Activated CD8-positive, alpha-beta T cell treated with anti-CD3 and anti-CD28 coated beads, Interleukin-2, amount 10 ng/mL, durations not matched to agents 7 days and 5 days (primary cell): ENCODE measurements at regions of chrX and their contacts with region 1.

Region 1: DNA sequence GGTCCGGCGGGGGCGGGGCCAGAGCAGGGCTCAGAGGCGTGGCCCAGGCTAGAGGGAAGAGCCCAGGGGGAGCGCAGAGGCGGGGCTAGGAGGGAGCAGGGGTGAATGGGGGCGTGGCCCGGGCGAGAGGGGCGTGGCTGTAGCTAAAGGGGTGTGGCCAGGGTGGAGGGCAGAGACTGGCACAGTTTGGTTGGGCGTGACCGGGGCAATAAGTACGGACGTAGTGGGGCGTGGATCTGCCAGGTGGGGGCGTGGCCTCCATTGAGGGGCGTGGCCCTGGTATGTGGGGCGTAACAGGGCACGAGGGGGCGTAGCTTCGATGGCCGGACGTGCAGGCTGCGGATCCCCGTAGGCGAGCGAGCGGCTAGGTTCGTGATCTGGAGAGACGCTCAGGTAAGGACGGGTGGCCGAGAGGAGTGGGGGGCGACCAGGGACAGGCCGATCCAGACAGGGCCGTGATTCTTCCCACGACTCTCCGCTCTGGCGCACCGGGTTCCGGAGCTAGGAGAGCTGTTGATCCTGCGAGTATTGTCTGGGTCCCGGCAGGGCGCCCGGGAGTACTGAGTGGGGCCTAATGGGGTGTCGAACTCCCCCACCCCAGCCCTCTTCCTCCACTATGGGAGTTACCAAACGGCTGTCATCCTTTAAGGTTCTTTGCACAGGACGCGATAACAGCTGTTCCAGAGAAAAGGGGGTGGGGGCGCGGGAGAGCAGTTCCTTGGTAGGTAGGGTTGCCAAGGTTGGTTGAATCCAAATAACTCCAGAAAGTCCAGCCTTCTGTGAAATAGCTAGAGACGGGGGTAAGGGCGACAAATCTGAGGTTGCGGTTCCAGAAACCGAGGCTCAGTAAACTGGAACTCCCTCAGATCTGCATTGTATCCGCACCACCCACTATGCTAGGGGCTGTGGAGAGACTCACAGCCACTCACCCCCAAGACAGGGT is at the start of gene CA5B:
- DNase-seq: peak; percentile 95
- ATAC-seq: peak; percentile 96
- H3K4me3 Mint-ChIP-seq: peak within 1 kb of the TSS; percentile 87
- H3K27ac Mint-ChIP-seq: peak within 1 kb of the TSS; percentile 86
- H3K4me1 Mint-ChIP-seq: peaks cover 26% of the 10 kb centered on the region
- H3K27me3 Mint-ChIP-seq: no peaks in the 10 kb centered on the region
- total RNA-seq, gene CA5B: 16.2 to 16.6 TPM

Region 2: GRCh38 chrX:15674841-15675489 is 63.3 kb before region 1 on chrX:
- CTCF ChIA-PET with region 1: no interaction called
- POLR2A ChIA-PET with region 1: interaction called, 16 read pairs
- DNase-seq: peak; percentile 90
- ATAC-seq: peak; percentile 87
- H3K4me3 Mint-ChIP-seq: no peak overlapping the region
- H3K27ac Mint-ChIP-seq: no peak overlapping the region
- H3K4me1 Mint-ChIP-seq: peaks cover 16% of the 10 kb centered on the region
- H3K27me3 Mint-ChIP-seq: peaks cover 3% of the 10 kb centered on the region

Region 3: GRCh38 chrX:15749642-15750610 is 11.7 kb after region 1 on chrX:
- CTCF ChIA-PET with region 1: interaction called, 23 read pairs
- POLR2A ChIA-PET with region 1: interaction called, 101 read pairs
- DNase-seq: peak; percentile 47
- ATAC-seq: peak; percentile 41
- H3K4me3 Mint-ChIP-seq: peak overlapping the region; percentile 50
- H3K27ac Mint-ChIP-seq: peak overlapping the region; percentile 98
- H3K4me1 Mint-ChIP-seq: peaks cover 48% of the 10 kb centered on the region
- H3K27me3 Mint-ChIP-seq: no peaks in the 10 kb centered on the region

Region 4: GRCh38 chrX:15758140-15758539 is 19.9 kb after region 1 on chrX:
- CTCF ChIA-PET with region 1: interaction called, 6 read pairs
- POLR2A ChIA-PET with region 1: interaction called, 17 read pairs
- DNase-seq: peak; percentile 21
- ATAC-seq: peak; percentile 66
- H3K4me3 Mint-ChIP-seq: no peak overlapping the region
- H3K27ac Mint-ChIP-seq: peak overlapping the region; percentile 82
- H3K4me1 Mint-ChIP-seq: peaks cover 30% of the 10 kb centered on the region
- H3K27me3 Mint-ChIP-seq: no peaks in the 10 kb centered on the region

Region 5: GRCh38 chrX:15789979-15790768 is 51.9 kb after region 1 on chrX and contains the start of gene ZRSR2:
- CTCF ChIA-PET with region 1: no interaction called
- POLR2A ChIA-PET with region 1: interaction called, 28 read pairs
- DNase-seq: peak; percentile 90
- ATAC-seq: peak; percentile 88
- H3K4me3 Mint-ChIP-seq: no peak within 1 kb of the TSS
- H3K27ac Mint-ChIP-seq: no peak within 1 kb of the TSS
- H3K4me1 Mint-ChIP-seq: peaks cover 21% of the 10 kb centered on the region
- H3K27me3 Mint-ChIP-seq: no peaks in the 10 kb centered on the region
- total RNA-seq, gene ZRSR2: 15.9 to 16.0 TPM

Region 6: DNA sequence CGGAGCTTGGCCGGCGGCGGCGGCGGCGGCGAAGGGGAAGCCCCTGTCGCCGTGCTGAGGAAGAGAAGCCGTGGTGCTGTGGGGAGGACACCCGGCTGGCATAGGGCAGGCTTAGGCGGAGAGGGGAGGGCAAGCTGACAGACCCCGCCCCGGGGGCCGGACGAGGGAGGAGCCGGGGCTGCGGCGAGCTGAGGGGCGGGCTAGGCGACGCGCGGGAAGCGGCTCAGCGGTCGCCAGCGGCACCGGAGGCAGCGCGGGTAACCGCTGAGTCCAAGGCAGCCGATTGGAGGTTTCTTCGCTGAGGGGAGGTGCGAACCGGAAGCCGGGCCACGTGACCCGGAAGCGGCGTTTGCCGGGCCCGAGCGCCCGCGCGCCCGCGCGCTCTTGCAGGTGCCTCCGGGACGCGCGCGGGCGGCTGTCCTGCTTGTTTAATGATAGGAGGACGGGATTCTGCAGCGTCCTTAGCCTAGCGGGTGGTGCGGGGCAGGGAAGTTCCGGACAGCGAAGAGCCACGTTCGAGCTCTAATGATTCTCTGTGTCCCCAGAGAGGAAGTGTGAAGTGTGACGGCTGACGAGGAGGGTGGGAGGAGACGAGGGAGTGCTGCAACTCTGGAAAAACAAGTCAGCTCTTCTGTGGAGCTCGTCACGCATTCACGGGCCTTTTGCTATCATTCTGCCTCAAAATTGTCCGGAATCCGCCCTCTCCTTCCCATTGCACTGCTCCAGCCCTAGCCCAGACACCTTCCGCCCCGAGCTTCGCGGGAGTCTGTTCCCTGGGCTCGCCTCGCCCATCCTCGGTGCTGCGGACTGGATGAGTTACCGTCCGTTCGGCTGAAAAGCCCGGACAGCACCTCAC is 116.7 kb after region 1 on chrX and contains the start of gene AP1S2:
- CTCF ChIA-PET with region 1: no interaction called
- POLR2A ChIA-PET with region 1: interaction called, 10 read pairs
- DNase-seq: peak; percentile 91
- ATAC-seq: peak; percentile 98
- H3K4me3 Mint-ChIP-seq: peak within 1 kb of the TSS; percentile 85
- H3K27ac Mint-ChIP-seq: peak within 1 kb of the TSS; percentile 96
- H3K4me1 Mint-ChIP-seq: peaks cover 23% of the 10 kb centered on the region
- H3K27me3 Mint-ChIP-seq: peaks cover 2% of the 10 kb centered on the region
- total RNA-seq, gene AP1S2: 33.9 to 35.9 TPM